B cell (primary cell): ENCODE measurements at regions of chr19 and their contacts with region 1.

Region 1: GRCh38 chr19:14689598-14690503 is at the start of gene ZNF333:
- DNase-seq: peak; percentile 98
- ATAC-seq: peak; percentile 89
- H3K4me3 ChIP-seq: peak within 1 kb of the TSS; percentile 68 to 82 (median 75)
- H3K4me3 Mint-ChIP-seq: peak within 1 kb of the TSS; percentile 95
- H3K27ac ChIP-seq: peak within 1 kb of the TSS; percentile 97 to 99
- H3K27ac Mint-ChIP-seq: peak within 1 kb of the TSS; percentile 99
- H3K4me1 ChIP-seq: peaks cover 27 to 29% of the 10 kb centered on the region in 2 donors
- H3K4me1 Mint-ChIP-seq: peaks cover 30% of the 10 kb centered on the region
- H3K27me3 ChIP-seq: no peaks in the 10 kb centered on the region
- H3K27me3 Mint-ChIP-seq: no peaks in the 10 kb centered on the region
- CTCF ChIP-seq: no peak
- total RNA-seq, gene ZNF333: 36.9 and 39.4 TPM in 2 replicates

Region 2: DNA sequence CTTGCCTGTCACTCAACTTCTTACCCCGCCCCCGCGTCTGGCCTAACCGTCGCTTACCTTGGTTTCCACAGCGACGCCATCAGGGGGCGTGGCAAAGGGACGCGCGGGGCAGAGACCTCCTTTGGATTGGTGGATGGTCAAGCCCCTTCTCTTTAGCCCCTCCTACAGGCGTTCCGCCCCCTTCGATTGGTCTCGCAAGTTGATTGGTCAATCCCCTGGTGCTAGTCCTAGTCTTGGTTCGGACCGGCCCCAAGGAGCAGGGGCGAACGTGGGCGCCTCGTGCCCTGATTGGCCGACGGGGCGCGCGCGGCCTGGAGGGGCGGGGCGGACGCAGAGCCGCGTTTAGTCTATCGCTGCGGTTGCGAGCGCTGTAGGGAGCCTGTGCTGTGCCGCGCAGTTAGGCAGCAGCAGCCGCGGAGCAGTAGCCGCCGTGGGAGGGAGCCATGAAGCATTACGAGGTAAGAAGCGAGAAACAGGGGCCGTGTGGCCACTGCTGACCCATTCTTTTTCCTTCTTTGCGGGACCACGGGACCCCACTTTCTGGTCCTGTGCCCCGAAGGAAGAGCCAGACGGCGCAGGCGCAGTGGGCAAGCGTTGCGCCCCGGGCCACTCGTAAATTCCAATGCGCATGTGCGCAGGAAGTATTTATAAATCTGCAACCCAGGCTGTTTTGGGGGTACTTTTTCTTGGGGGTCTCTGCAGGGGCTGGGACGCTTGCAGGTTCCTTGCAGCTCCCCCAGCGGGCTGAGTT is 160.4 kb before region 1 on chr19 and contains the start of gene TECR:
- CTCF ChIA-PET with region 1: interaction called, 3 read pairs
- POLR2A ChIA-PET with region 1: no interaction called
- intact Hi-C with region 1: loop called (anchors 1 kb)
- DNase-seq: peak; percentile 100
- ATAC-seq: peak; percentile 97
- H3K4me3 ChIP-seq: peak within 1 kb of the TSS; percentile 64 to 95 (median 72)
- H3K4me3 Mint-ChIP-seq: peak within 1 kb of the TSS; percentile 91
- H3K27ac ChIP-seq: peak within 1 kb of the TSS; percentile 56 to 86
- H3K27ac Mint-ChIP-seq: peak within 1 kb of the TSS; percentile 95
- H3K4me1 ChIP-seq: peaks cover 13 to 22% of the 10 kb centered on the region in 2 donors
- H3K4me1 Mint-ChIP-seq: peaks cover 29% of the 10 kb centered on the region
- H3K27me3 ChIP-seq: no peaks in the 10 kb centered on the region
- H3K27me3 Mint-ChIP-seq: no peaks in the 10 kb centered on the region
- CTCF ChIP-seq: no peak
- total RNA-seq, gene TECR: 68.9 and 72.4 TPM in 2 replicates

Region 3: GRCh38 chr19:14556662-14557188 is 133.1 kb before region 1 on chr19:
- CTCF ChIA-PET with region 1: interaction called, 36 read pairs
- POLR2A ChIA-PET with region 1: no interaction called
- intact Hi-C with region 1: no loop called
- DNase-seq: peak; percentile 80
- ATAC-seq: peak; percentile 82
- H3K4me3 ChIP-seq: no peak overlapping the region
- H3K4me3 Mint-ChIP-seq: peak overlapping the region; percentile 41
- H3K27ac ChIP-seq: no peak overlapping the region
- H3K27ac Mint-ChIP-seq: no peak overlapping the region
- H3K4me1 ChIP-seq: peaks cover 4 to 19% of the 10 kb centered on the region in 2 donors
- H3K4me1 Mint-ChIP-seq: peaks cover 30% of the 10 kb centered on the region
- H3K27me3 ChIP-seq: no peaks in the 10 kb centered on the region
- H3K27me3 Mint-ChIP-seq: no peaks in the 10 kb centered on the region
- CTCF ChIP-seq: peak; percentile 92

Region 4: GRCh38 chr19:14577885-14578427 is 111.9 kb before region 1 on chr19:
- CTCF ChIA-PET with region 1: interaction called, 681 read pairs
- POLR2A ChIA-PET with region 1: interaction called, 90 read pairs
- intact Hi-C with region 1: loop called (anchors 1 kb)
- DNase-seq: peak; percentile 75
- ATAC-seq: peak; percentile 49
- H3K4me3 ChIP-seq: no peak overlapping the region
- H3K4me3 Mint-ChIP-seq: peak overlapping the region; percentile 74
- H3K27ac ChIP-seq: peak overlapping the region; percentile 42 to 72
- H3K27ac Mint-ChIP-seq: peak overlapping the region; percentile 94
- H3K4me1 ChIP-seq: peaks cover 65 to 82% of the 10 kb centered on the region in 2 donors
- H3K4me1 Mint-ChIP-seq: peaks cover 58% of the 10 kb centered on the region
- H3K27me3 ChIP-seq: no peaks in the 10 kb centered on the region
- H3K27me3 Mint-ChIP-seq: no peaks in the 10 kb centered on the region
- CTCF ChIP-seq: no peak

Region 5: DNA sequence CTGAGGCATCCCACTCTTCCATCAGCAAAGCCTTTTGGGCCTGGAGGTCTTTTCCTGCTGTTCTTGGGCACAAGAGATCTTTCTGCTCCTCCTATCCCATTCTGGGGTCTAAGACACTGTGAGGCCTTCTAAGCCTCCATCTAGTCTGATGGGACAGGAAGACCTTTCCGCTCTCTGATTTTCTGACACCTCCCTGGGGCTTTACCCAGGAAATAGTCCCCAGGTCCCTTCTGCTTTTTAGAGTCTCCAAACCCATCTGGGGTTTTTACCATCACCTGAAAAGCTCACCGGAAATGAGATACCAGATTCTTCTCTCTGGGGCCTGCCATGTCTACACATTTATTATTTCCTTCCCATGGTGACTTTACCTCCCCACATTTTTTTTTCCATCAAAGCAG is 85.9 kb before region 1 on chr19:
- CTCF ChIA-PET with region 1: interaction called, 54 read pairs
- POLR2A ChIA-PET with region 1: interaction called, 8 read pairs
- intact Hi-C with region 1: loop called (anchors 2 kb)
- DNase-seq: peak; percentile 89
- ATAC-seq: peak; percentile 90
- H3K4me3 ChIP-seq: peak overlapping the region in 2 of 5 experiments; percentile 22 to 26
- H3K4me3 Mint-ChIP-seq: peak overlapping the region; percentile 67
- H3K27ac ChIP-seq: peak overlapping the region; percentile 85 to 94
- H3K27ac Mint-ChIP-seq: peak overlapping the region; percentile 83
- H3K4me1 ChIP-seq: peaks cover 54% of the 10 kb centered on the region in 2 donors
- H3K4me1 Mint-ChIP-seq: peaks cover 63% of the 10 kb centered on the region
- H3K27me3 ChIP-seq: no peaks in the 10 kb centered on the region
- H3K27me3 Mint-ChIP-seq: no peaks in the 10 kb centered on the region
- CTCF ChIP-seq: no peak

Region 6: DNA sequence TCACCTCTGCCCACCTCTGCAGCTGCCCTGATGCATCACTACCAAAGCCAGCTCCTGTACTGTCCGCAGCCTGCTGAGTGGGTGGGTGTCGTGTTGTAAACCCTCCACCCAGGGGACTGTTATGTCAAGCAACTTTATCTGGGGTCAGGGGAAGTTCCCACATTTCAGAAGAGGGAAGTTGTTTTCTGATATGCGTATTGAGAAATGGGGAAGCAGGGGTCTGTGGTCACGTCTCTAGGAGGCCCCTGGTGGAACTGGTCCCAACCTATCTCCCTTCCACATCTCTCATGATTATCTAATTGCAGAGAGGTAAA is 75.8 kb before region 1 on chr19:
- CTCF ChIA-PET with region 1: interaction called, 54 read pairs
- POLR2A ChIA-PET with region 1: interaction called, 3 read pairs
- intact Hi-C with region 1: loop called (anchors 1 kb)
- DNase-seq: peak; percentile 91
- ATAC-seq: peak; percentile 88
- H3K4me3 ChIP-seq: peak overlapping the region in 1 of 5 experiments; percentile 38
- H3K4me3 Mint-ChIP-seq: peak overlapping the region; percentile 89
- H3K27ac ChIP-seq: peak overlapping the region; percentile 91 to 92
- H3K27ac Mint-ChIP-seq: peak overlapping the region; percentile 99
- H3K4me1 ChIP-seq: peaks cover 53 to 64% of the 10 kb centered on the region in 2 donors
- H3K4me1 Mint-ChIP-seq: peaks cover 49% of the 10 kb centered on the region
- H3K27me3 ChIP-seq: no peaks in the 10 kb centered on the region
- H3K27me3 Mint-ChIP-seq: no peaks in the 10 kb centered on the region
- CTCF ChIP-seq: peak; percentile 25

Region 7: DNA sequence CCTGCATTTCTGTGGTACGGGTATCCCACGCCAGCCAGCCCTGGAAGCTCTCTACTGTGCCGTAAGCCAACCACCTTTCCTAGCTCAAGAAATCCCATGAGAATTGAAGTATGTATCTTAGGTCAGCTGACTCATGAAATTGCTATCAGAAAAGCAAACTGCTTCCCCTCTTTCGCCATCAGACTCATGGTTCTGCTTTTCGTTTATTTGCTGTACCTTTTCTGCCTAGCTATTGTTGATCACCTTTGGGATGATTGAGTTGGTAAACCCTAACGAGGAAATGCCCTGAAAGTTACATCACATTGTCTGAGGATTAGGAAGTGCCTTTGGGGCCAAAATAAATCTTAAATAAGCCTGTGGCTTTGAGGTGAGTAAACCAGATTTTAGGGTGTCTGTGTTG is 15.1 kb before region 1 on chr19 and contains the start of gene ADGRE3:
- CTCF ChIA-PET with region 1: interaction called, 95 read pairs
- POLR2A ChIA-PET with region 1: interaction called, 3 read pairs
- intact Hi-C with region 1: no loop called
- DNase-seq: peak; percentile 67
- ATAC-seq: peak; percentile 69
- H3K4me3 ChIP-seq: peak within 1 kb of the TSS in 1 of 5 experiments; percentile 72
- H3K4me3 Mint-ChIP-seq: peak within 1 kb of the TSS; percentile 77
- H3K27ac ChIP-seq: peak within 1 kb of the TSS in 1 of 2 donors; percentile 12
- H3K27ac Mint-ChIP-seq: peak within 1 kb of the TSS; percentile 88
- H3K4me1 ChIP-seq: peaks cover 24 to 31% of the 10 kb centered on the region in 2 donors
- H3K4me1 Mint-ChIP-seq: peaks cover 29% of the 10 kb centered on the region
- H3K27me3 ChIP-seq: no peaks in the 10 kb centered on the region
- H3K27me3 Mint-ChIP-seq: no peaks in the 10 kb centered on the region
- CTCF ChIP-seq: no peak
- total RNA-seq, gene ADGRE3: 0.17 TPM in 1 of 2 replicates, not detected in the other

Region 8: GRCh38 chr19:14775869-14776586 is 86.2 kb after region 1 on chr19:
- CTCF ChIA-PET with region 1: no interaction called
- POLR2A ChIA-PET with region 1: no interaction called
- intact Hi-C with region 1: no loop called
- DNase-seq: peak; percentile 46
- ATAC-seq: no peak
- H3K4me3 ChIP-seq: peak overlapping the region; percentile 40 to 66 (median 48)
- H3K4me3 Mint-ChIP-seq: peak overlapping the region; percentile 83
- H3K27ac ChIP-seq: peak overlapping the region in 1 of 2 donors; percentile 19
- H3K27ac Mint-ChIP-seq: no peak overlapping the region
- H3K4me1 ChIP-seq: peaks cover 16 to 26% of the 10 kb centered on the region in 2 donors
- H3K4me1 Mint-ChIP-seq: peaks cover 25% of the 10 kb centered on the region
- H3K27me3 ChIP-seq: peaks cover 0 to 20% (median 4%) of the 10 kb centered on the region in 4 experiments
- H3K27me3 Mint-ChIP-seq: peaks cover 13% of the 10 kb centered on the region
- CTCF ChIP-seq: no peak